GM23248 (cell line): ENCODE measurements at regions of chr20 and their contacts with region 1.

Region 1: GRCh38 chr20:7285918-7286556 is 518.6 kb downstream of the BMP2 start:
- DNase-seq: peak; percentile 78
- H3K4me3 ChIP-seq: no peak overlapping the region
- H3K27ac ChIP-seq: no peak overlapping the region
- H3K4me1 ChIP-seq: no peaks in the 10 kb centered on the region
- H3K27me3 ChIP-seq: no peaks in the 10 kb centered on the region; the same call in 1 of the 2 replicates

Region 2: GRCh38 chr20:6767536-6768227 is 518.4 kb before region 1 on chr20 and contains the start of gene BMP2:
- in situ Hi-C with region 1: loop called (anchors 25 kb)
- DNase-seq: peak; percentile 76
- H3K4me3 ChIP-seq: peak within 1 kb of the TSS; percentile 78
- H3K27ac ChIP-seq: no peak within 1 kb of the TSS
- H3K4me1 ChIP-seq: no peaks in the 10 kb centered on the region
- H3K27me3 ChIP-seq: peaks cover under 1% of the 10 kb centered on the region; the same call in 1 of the 2 replicates
- total RNA-seq, gene BMP2: 0.38 and 0.76 TPM in 2 replicates